Testis (tissue), 5 donors: ENCODE measurements at regions of chr5 and their contacts with region 1.

Region 1: GRCh38 chr5:139795074-139796001 is at the start of gene PSD2:
- DNase-seq: peak; percentile 42
- H3K4me3 ChIP-seq: peak within 1 kb of the TSS; percentile 43 to 49
- H3K27ac ChIP-seq: no peak within 1 kb of the TSS
- H3K4me1 ChIP-seq: peaks cover 4% of the 10 kb centered on the region
- H3K27me3 ChIP-seq: no peaks in the 10 kb centered on the region
- CTCF ChIP-seq: no peak
- POLR2A ChIP-seq: no peak
- total RNA-seq, gene PSD2: 1.9 to 2.0 TPM

Region 2: GRCh38 chr5:139863855-139864558 is 68.7 kb after region 1 on chr5:
- intact Hi-C with region 1: loop called (anchors 10 kb)
- DNase-seq: peak; percentile 83
- H3K4me3 ChIP-seq: no peak overlapping the region
- H3K27ac ChIP-seq: peak overlapping the region in 1 of 2 donors; percentile 61
- H3K4me1 ChIP-seq: peaks cover 39% of the 10 kb centered on the region
- H3K27me3 ChIP-seq: no peaks in the 10 kb centered on the region
- CTCF ChIP-seq: peak; percentile 70 to 91 (median 91)
- POLR2A ChIP-seq: no peak

Region 3: DNA sequence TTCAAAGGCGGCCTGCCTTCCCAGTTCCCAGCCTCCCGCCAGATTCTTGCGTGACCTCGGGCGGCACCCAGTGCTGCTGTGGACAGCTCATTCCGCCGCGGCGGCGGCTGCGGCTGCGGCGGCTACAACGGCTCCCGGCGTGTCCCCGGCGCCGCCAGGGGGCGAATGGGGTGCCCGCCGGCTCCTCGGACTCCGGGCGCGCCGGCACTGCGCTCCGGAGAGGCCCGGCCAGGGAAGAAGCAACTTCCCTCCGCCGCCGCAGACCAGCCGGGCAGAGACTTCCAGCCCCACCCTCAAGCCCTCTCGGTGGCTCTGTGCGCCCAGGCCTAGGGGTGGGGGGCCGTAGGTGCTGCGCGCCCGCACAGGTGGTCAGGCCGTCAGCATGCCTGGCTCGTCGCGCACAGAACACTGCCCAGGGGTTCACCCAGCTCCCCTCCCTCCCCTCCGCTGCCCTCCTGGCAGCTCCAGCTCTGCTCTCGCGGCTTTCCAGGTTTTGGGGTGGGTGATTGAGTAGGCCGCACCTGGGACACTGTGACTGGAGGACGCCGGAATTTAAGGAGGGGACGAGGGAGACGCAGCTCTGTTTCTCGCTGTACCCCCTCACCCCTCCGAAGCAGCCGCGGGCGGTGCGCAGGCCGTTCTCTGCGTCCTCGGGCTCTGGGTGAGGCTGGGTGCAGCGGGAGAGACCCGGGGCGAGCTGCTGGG is 350.6 kb after region 1 on chr5:
- intact Hi-C with region 1: no loop called
- DNase-seq: peak; percentile 75
- H3K4me3 ChIP-seq: peak overlapping the region; percentile 32 to 57
- H3K27ac ChIP-seq: peak overlapping the region in 1 of 2 donors; percentile 31
- H3K4me1 ChIP-seq: peaks cover 13% of the 10 kb centered on the region
- H3K27me3 ChIP-seq: no peaks in the 10 kb centered on the region
- CTCF ChIP-seq: peak; percentile 65 to 75 (median 74)
- POLR2A ChIP-seq: no peak